ENCODE measurements at regions of chr19 and their contacts with region 1.

Region 1: DNA sequence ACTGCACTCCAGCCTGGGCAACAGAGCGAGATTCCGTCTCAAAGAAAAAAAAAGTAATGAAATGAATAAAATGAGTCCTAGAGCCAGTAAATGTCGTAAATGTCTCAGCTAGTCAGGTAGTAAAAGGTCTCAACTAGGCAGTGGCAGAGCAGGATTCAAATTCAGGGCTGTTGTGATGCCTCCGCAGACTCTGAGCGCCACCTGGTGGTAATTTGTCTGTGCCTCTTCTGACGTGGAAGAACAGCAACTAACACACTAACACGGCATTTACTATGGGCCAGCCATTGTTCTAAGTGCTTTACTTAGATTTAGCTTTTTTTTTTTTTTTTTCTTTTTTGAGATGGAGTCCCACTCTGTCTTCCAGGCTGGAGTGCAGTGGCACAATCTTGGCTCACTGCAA is 30.2 kb downstream of the CYP2F1 start:
- DNase-seq: peak; percentile 61 to 82
- ATAC-seq: peak in 1 of 4 donors; percentile 47
- H3K4me3 ChIP-seq: no peak overlapping the region
- H3K27ac ChIP-seq: no peak overlapping the region
- H3K4me1 ChIP-seq: no peaks in the 10 kb centered on the region
- H3K27me3 ChIP-seq: no peaks in the 10 kb centered on the region
- CTCF ChIP-seq: peak; percentile 64

Region 2: DNA sequence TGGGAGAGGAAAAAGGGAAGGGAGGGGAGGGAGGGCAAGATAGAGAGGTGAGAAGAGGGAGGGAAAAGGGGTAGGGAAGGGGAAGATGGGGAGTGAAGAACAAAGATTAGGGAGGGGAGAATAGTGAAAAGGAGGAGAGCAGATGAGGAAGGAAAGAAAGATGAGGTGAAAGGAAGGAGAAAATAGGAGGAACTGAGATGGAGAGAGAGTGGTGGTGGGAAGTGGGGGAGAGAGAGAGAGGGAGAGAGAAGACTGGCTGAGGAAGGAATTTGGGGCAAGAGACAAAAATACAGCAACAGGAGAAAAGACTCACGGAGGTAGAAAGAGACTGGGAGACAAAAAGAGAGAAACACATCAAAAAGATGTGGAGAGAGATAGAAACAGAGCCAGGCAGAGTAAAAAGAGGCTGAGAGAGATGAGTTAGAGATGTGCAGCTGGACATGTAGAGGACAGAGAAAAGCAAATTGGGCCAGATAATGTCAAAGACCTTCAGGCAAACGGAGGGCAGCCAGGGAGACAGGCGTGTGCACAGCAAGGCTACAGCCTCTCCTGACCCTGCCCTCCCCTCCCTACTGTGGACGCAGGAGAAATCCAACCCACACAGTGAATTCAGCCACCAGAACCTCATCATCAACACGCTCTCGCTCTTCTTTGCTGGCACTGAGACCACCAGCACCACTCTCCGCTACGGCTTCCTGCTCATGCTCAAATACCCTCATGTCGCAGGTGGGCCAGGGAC is 202.8 kb before region 1 on chr19:
- intact Hi-C with region 1: no loop called
- DNase-seq: no peak
- ATAC-seq: no peak
- H3K4me3 ChIP-seq: no peak overlapping the region
- H3K27ac ChIP-seq: no peak overlapping the region
- H3K4me1 ChIP-seq: no peaks in the 10 kb centered on the region
- H3K27me3 ChIP-seq: peaks cover 0 to 4% (median 0%) of the 10 kb centered on the region in 3 donors
- CTCF ChIP-seq: no peak

Region 3: DNA sequence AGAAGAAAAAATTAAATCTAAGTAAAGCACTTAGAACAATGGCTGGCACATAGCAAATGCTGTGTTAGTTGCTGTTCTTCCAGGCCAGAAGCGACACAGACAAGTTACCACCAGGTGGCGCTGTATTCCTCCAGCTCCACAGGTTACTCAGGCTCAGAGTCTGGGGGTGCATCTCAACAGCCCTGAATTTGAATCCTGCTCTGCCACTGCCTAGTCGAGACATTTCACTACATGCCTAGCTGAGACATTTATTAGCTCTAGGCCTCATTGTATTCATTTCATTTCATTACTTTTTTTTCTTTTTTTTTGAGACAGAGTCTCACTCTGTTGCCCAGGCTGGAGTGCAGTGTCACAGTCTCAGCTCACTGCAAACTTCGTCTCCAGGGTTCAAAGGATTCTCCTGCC is 169.8 kb before region 1 on chr19:
- intact Hi-C with region 1: loop called in 1 of 2 experiments (anchors 10 kb)
- DNase-seq: peak in 1 of 2 donors; percentile 40
- ATAC-seq: no peak
- H3K4me3 ChIP-seq: no peak overlapping the region
- H3K27ac ChIP-seq: no peak overlapping the region
- H3K4me1 ChIP-seq: no peaks in the 10 kb centered on the region
- H3K27me3 ChIP-seq: peaks cover 0 to 4% (median 0%) of the 10 kb centered on the region in 3 donors
- CTCF ChIP-seq: peak; percentile 61

Region 4: DNA sequence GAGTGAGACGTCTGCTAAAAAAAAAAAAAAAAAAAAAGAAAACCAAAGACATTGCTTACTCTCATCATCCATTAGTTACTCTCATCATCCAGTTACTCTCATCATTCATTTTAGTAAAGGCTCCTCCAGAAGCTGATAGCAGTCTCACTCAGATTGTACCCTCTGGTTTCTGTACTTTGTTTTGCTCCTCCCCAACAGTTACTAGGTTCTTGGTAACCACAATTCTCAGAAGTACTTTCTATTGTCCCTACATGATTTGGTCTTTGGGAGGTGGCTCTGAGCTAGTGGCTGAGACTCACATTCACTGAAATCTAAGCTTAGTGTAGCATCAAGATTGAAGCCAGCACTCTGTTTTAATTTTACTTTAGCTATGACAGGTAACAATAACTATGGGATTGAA is 312.8 kb after region 1 on chr19:
- intact Hi-C with region 1: no loop called
- DNase-seq: no peak
- ATAC-seq: no peak
- H3K4me3 ChIP-seq: no peak overlapping the region
- H3K27ac ChIP-seq: no peak overlapping the region
- H3K4me1 ChIP-seq: no peaks in the 10 kb centered on the region
- H3K27me3 ChIP-seq: peaks cover 0 to 28% (median 4%) of the 10 kb centered on the region in 3 donors
- CTCF ChIP-seq: no peak